ENCODE measurements at regions of chr21 and their contacts with region 1.

Region 1: GRCh38 chr21:26948194-26948593 is 18.7 kb downstream of the ADAMTS5 start:
- DNase-seq: no peak
- H3K4me3 ChIP-seq: no peak overlapping the region
- H3K27ac ChIP-seq: no peak overlapping the region
- H3K4me1 ChIP-seq: peaks cover 3 to 10% (median 8%) of the 10 kb centered on the region in 4 experiments; a peak in 6 of 7 replicates
- H3K27me3 ChIP-seq: no peaks in the 10 kb centered on the region
- CTCF ChIP-seq: no peak
- EP300 ChIP-seq: no peak
- POLR2A ChIP-seq: no peak
- RAD21 ChIP-seq: no peak

Region 2: GRCh38 chr21:26686278-26686677 is 261.9 kb before region 1 on chr21:
- CTCF ChIA-PET with region 1: no interaction called
- POLR2A ChIA-PET with region 1: no interaction called
- DNase-seq: no peak
- H3K4me3 ChIP-seq: peak overlapping the region in 1 of 4 experiments; percentile 27; a peak in 1 of 8 replicates
- H3K27ac ChIP-seq: no peak overlapping the region
- H3K4me1 ChIP-seq: no peaks in the 10 kb centered on the region
- H3K27me3 ChIP-seq: no peaks in the 10 kb centered on the region
- CTCF ChIP-seq: no peak
- EP300 ChIP-seq: no peak
- POLR2A ChIP-seq: no peak
- RAD21 ChIP-seq: no peak

Region 3: GRCh38 chr21:26961698-26962097 is 13.5 kb after region 1 on chr21:
- CTCF ChIA-PET with region 1: interaction called, 15 read pairs
- POLR2A ChIA-PET with region 1: no interaction called
- DNase-seq: peak in 1 of 2 experiments; percentile 66
- H3K4me3 ChIP-seq: no peak overlapping the region
- H3K27ac ChIP-seq: no peak overlapping the region
- H3K4me1 ChIP-seq: peaks cover 3 to 9% (median 6%) of the 10 kb centered on the region in 4 experiments; a peak in 6 of 7 replicates
- H3K27me3 ChIP-seq: peaks cover 0 to 21% (median 17%) of the 10 kb centered on the region in 4 experiments; a peak in 6 of 7 replicates
- CTCF ChIP-seq: peak; percentile 60 to 75 (median 70)
- EP300 ChIP-seq: no peak
- POLR2A ChIP-seq: no peak
- RAD21 ChIP-seq: peak; percentile 62 to 74

Measured in H1 (cell line).